HCT116 (cell line): ENCODE measurements at regions of chr14 and their contacts with region 1.

Region 1: DNA sequence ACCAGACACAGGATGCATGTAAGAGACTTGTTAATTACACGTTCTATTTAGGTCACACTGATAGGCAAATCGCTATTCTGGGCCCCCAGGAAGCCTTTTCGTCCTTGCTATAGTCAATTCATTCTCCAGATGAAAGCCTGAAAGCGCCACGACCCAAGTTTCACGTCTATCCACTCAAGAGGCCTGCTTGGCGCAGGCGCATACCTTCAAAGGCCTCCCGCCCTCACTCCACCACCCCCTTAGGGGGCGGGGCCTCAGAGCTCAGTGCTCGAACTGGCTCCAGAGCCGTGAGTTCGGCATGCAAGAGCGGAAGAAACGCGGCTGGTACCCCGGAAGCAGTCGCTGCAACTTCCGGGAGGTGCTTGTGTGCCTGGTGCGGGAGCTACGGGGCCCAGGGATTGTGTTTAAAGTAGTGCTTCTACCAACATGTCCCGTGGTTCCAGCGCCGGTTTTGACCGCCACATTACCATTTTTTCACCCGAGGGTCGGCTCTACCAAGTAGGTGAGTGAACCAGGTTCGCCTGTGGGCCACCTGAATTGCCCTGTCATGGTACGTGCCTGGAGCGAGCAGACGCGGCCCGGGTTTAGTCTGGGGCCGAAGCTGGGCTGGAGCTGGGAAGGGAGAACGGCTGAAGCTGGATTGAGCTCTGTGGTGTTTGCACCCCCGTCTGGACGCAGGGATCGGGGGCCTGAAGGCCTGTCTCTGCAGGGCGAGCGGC is at the start of gene PSMA6:
- DNase-seq: peak; percentile 98
- ATAC-seq: peak; percentile 97
- H3K4me3 ChIP-seq: peak within 1 kb of the TSS; percentile 88 to 99
- H3K27ac ChIP-seq: peak within 1 kb of the TSS; percentile 79
- H3K4me1 ChIP-seq: peaks cover 9 to 13% of the 10 kb centered on the region in 2 experiments
- H3K27me3 ChIP-seq: no peaks in the 10 kb centered on the region
- CTCF ChIP-seq: no peak
- POLR2A ChIP-seq: peak; percentile 79
- RAD21 ChIP-seq: 0 out of 2 replicates have a peak, but pooled peaks have one; percentile 6
- total RNA-seq, gene PSMA6: 194 TPM

Region 2: DNA sequence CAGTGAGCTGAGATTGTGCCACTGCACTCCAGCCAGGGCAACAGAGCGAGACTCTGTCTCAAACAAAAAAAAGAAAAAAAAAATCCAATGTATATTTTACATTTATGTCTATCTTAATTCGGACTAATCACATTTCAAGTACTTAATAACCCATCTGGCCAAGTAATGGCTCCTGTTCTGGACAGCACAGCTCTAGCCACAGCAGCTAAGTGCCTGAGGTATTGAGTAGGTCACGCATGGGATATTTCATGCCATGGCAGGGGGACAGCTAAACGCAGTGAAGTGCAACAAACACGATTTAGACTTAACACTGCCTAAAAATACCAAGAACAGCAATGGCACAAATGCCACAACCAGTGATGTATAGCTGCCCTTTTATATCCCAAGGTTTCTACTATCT is 425.0 kb before region 1 on chr14:
- CTCF ChIA-PET with region 1: no interaction called
- POLR2A ChIA-PET with region 1: interaction called, 11 read pairs
- RAD21 ChIA-PET with region 1: no interaction called
- intact Hi-C with region 1: no loop called
- DNase-seq: no peak
- ATAC-seq: no peak
- H3K4me3 ChIP-seq: no peak overlapping the region
- H3K27ac ChIP-seq: no peak overlapping the region
- H3K4me1 ChIP-seq: no peaks in the 10 kb centered on the region
- H3K27me3 ChIP-seq: no peaks in the 10 kb centered on the region
- CTCF ChIP-seq: no peak
- POLR2A ChIP-seq: no peak
- RAD21 ChIP-seq: no peak

Region 3: DNA sequence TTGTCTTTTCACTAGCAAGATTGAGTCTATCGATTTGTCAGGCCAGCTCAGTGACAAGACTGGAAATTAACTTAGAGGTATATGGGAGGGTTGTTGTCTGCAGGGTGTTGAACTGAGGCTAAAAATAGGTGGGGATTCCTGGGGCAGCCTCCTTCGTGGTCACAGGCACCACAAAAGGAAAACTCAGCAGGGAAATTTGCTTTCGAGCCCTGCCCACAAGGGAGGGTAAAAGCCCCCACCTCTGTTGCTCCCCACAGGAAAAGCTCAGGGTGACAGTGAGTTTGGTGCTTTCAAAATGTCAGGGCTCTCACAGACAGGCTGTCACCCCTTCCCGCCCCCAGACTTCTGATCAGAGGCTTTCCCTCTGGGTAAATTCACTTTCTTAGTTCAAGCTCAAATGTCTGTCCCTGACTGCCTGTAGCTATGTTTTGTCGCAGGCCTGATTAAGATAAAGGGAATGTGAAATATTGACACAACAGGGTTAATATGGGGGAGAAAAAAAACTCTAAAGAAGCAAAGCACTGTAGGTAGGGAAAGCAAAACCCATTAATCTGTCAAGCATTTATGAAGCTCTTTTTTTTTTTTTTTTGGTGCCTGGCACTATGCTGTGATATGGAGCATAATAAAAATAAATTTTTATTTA is 124.0 kb after region 1 on chr14:
- CTCF ChIA-PET with region 1: no interaction called
- POLR2A ChIA-PET with region 1: no interaction called
- RAD21 ChIA-PET with region 1: no interaction called
- intact Hi-C with region 1: no loop called
- DNase-seq: no peak
- ATAC-seq: no peak
- H3K4me3 ChIP-seq: no peak overlapping the region
- H3K27ac ChIP-seq: no peak overlapping the region
- H3K4me1 ChIP-seq: peaks cover 2 to 6% of the 10 kb centered on the region in 2 experiments; a peak in 1 of 4 replicates
- H3K27me3 ChIP-seq: no peaks in the 10 kb centered on the region
- CTCF ChIP-seq: no peak
- POLR2A ChIP-seq: no peak
- RAD21 ChIP-seq: no peak